Activated CD4-positive, alpha-beta T cell treated with anti-CD3 and anti-CD28 coated beads for 36 hours (primary cell): ENCODE measurements at regions of chr22 and their contacts with region 1.

Region 1: DNA sequence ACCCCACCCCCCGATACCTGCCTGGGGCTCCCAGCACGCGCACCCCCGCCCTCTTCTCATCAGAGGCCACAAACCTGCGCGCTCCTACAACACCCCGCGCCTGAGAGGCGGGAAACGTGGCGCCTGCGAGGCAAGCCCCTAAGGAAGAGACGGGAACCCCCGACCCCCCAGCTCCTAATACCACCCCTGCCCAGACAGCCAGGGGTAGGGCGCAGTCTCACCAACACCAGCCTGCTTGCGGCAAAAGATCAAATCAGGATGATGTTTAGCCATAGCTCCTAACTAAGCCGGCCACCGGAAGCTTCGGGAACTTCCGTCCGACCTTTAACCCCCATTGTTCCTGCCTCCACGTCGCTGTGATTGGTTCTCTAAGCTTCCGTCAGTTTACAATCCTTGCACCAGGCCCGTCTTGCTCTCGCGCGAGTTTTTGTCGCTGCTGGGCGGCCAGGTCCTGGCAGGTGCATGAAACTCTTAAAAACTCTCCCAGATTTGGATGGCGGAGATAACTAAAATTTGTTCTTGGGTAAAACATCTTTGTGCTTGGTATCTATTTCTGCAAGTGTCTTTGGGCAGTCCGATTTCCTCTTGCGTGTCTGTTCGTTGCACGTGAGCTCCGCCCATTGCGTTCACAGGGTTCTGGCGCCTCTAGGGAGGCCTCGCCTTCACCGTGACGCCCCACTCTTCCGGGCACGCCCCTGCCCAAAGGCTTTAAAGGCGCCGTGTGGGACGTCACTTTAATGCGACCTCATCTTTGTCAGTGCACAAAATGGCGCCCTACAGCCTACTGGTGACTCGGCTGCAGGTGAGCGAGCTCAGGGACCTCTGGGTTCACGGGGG is at the starts of genes ACO2 and PHF5A:
- DNase-seq: peak; percentile 98
- ATAC-seq: peak; percentile 94
- H3K4me3 Mint-ChIP-seq: peak within 1 kb of the TSS; percentile 90
- H3K27ac Mint-ChIP-seq: peak within 1 kb of the TSS; percentile 99
- H3K4me1 Mint-ChIP-seq: peaks cover 47% of the 10 kb centered on the region
- H3K27me3 Mint-ChIP-seq: no peaks in the 10 kb centered on the region
- total RNA-seq, gene ACO2: 95.4 to 106 TPM
- total RNA-seq, gene PHF5A: 54.5 to 61.1 TPM

Region 2: GRCh38 chr22:41204992-41205900 is 263.4 kb before region 1 on chr22 and contains the start of gene L3MBTL2:
- CTCF ChIA-PET with region 1: no interaction called
- POLR2A ChIA-PET with region 1: no interaction called
- intact Hi-C with region 1: loop called in 1 of 2 experiments (anchors 1 kb)
- DNase-seq: peak; percentile 100
- ATAC-seq: peak; percentile 100
- H3K4me3 Mint-ChIP-seq: peak within 1 kb of the TSS; percentile 86
- H3K27ac Mint-ChIP-seq: peak within 1 kb of the TSS; percentile 89
- H3K4me1 Mint-ChIP-seq: peaks cover 20% of the 10 kb centered on the region
- H3K27me3 Mint-ChIP-seq: peaks cover 10% of the 10 kb centered on the region
- total RNA-seq, gene L3MBTL2: 24.4 to 25.1 TPM

Region 3: GRCh38 chr22:41403532-41404318 is 64.9 kb before region 1 on chr22:
- CTCF ChIA-PET with region 1: interaction called, 10 read pairs
- POLR2A ChIA-PET with region 1: no interaction called
- intact Hi-C with region 1: loop called in 1 of 2 experiments (anchors 2 kb)
- DNase-seq: peak; percentile 93
- ATAC-seq: peak; percentile 99
- H3K4me3 Mint-ChIP-seq: no peak overlapping the region
- H3K27ac Mint-ChIP-seq: no peak overlapping the region
- H3K4me1 Mint-ChIP-seq: peaks cover 17% of the 10 kb centered on the region
- H3K27me3 Mint-ChIP-seq: no peaks in the 10 kb centered on the region

Region 4: GRCh38 chr22:41589391-41590241 is 121.0 kb after region 1 on chr22 and contains the start of gene PMM1:
- CTCF ChIA-PET with region 1: no interaction called
- POLR2A ChIA-PET with region 1: interaction called, 7 read pairs
- intact Hi-C with region 1: loop called in 1 of 2 experiments (anchors 1 kb)
- DNase-seq: peak; percentile 100
- ATAC-seq: peak; percentile 99
- H3K4me3 Mint-ChIP-seq: peak within 1 kb of the TSS; percentile 88
- H3K27ac Mint-ChIP-seq: peak within 1 kb of the TSS; percentile 85
- H3K4me1 Mint-ChIP-seq: peaks cover 15% of the 10 kb centered on the region
- H3K27me3 Mint-ChIP-seq: no peaks in the 10 kb centered on the region
- total RNA-seq, gene PMM1: 30.4 to 37.4 TPM

Region 5: GRCh38 chr22:41688365-41689211 is 220.0 kb after region 1 on chr22 and contains the start of gene SNU13:
- CTCF ChIA-PET with region 1: no interaction called
- POLR2A ChIA-PET with region 1: no interaction called
- intact Hi-C with region 1: loop called in 1 of 2 experiments (anchors 2 kb)
- DNase-seq: peak; percentile 96
- ATAC-seq: peak; percentile 93
- H3K4me3 Mint-ChIP-seq: peak within 1 kb of the TSS; percentile 98
- H3K27ac Mint-ChIP-seq: peak within 1 kb of the TSS; percentile 98
- H3K4me1 Mint-ChIP-seq: peaks cover 34% of the 10 kb centered on the region
- H3K27me3 Mint-ChIP-seq: no peaks in the 10 kb centered on the region
- total RNA-seq, gene SNU13: 275 to 281 TPM